Activated B cell treated with CpG ODN at 0.5 μM for 24 hours (primary cell): ENCODE measurements at regions of chr12 and their contacts with region 1.

Region 1: DNA sequence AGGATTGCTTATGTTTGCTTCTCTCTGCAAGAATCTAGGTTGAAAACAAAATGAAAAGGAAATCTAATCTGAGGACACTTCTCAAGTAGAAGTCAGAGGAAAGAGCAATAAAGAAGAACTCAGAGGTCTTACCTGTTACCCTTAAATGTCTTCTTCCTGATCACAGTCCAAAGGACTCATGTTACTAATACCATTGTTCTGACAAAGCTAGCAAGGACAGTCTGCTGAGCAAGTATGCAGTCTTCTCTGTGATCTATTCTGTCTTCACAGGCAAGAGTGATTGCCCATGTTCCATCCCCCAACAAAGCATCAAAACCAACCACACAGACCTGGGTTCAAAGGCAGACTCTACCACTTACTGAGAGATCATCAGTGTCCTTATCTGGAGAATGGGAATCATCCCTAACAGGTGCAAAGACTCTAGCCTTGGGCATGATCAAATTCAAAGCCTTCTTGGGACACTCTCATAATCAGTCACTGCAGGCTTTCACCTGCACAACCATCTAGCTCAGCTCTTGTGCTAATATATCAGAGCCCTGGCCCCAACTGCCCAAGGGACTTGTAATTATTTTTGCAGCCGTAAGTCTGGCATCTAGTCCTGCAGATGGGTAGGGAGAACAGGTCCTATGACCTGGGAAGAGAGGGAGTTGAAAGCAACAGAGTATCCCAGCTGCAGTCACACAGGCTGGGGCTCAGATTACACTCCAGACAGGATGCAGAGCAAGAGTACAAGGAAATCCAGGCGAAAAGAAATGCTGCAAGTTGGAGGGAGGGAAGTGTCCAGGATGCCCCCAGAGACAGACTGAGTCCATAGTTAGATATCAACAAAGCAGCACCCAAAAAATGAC is 97.9 kb upstream of the NUDT4 start:
- DNase-seq: no peak
- ATAC-seq: no peak
- H3K4me3 Mint-ChIP-seq: no peak overlapping the region
- H3K27ac Mint-ChIP-seq: no peak overlapping the region
- H3K4me1 Mint-ChIP-seq: no peaks in the 10 kb centered on the region
- H3K27me3 Mint-ChIP-seq: no peaks in the 10 kb centered on the region
- CTCF ChIP-seq: no peak

Region 2: DNA sequence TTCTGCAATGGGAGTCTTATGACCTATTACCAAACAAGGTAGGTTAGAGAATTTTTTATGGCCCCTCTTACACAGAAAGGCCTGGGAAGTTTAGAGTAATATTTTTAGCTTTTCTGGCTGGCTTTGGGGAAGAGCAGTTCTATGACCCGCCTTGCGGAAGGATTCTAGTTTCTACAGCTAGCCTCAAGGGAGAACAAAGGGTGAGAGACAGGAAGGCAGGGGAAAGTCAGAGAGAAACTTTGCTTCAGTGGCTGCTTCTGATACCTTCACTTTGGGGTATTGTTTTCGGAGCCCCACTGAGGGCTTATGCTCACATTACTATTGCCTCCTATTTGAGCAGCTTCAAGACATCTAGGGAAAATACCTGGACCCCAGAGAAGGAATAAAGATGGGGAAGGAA is 17.2 kb after region 1 on chr12:
- CTCF ChIA-PET with region 1: no interaction called
- POLR2A ChIA-PET with region 1: no interaction called
- intact Hi-C with region 1: loop called (anchors 2 kb)
- DNase-seq: no peak
- ATAC-seq: peak; percentile 77
- H3K4me3 Mint-ChIP-seq: peak overlapping the region; percentile 68
- H3K27ac Mint-ChIP-seq: no peak overlapping the region
- H3K4me1 Mint-ChIP-seq: peaks cover 13% of the 10 kb centered on the region
- H3K27me3 Mint-ChIP-seq: peaks cover 4% of the 10 kb centered on the region
- CTCF ChIP-seq: no peak